Activated naive CD4-positive, alpha-beta T cell treated with anti-CD3 and anti-CD28 coated beads for 36 hours (primary cell): ENCODE measurements at regions of chr5 and their contacts with region 1.

Region 1: DNA sequence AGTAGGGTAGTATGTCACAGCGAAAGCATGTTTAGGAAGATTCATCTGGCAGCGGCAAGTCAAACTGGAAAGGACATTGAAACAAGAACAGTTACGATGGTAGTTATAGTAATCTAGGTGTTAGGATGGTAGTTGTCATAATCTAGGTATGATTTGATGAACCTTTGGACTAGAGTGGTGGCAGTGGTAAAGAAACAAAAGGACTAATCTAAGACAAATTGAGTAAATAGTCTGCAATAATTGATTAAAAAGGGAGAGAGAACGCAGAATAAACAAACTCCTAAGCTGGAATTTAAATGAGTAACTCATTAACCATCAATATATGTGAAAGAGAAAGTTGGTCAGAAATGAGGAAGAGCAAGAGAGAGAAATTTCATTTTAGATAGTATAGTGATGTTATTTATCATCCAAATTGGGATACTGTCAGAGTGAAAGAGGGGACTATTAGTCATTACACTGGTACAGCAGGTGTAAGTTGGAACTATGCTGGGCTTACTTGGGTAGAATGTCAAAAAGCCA is 56.8 kb downstream of the MTREX start:
- DNase-seq: peak; percentile 28
- H3K4me3 Mint-ChIP-seq: no peak overlapping the region
- H3K27ac Mint-ChIP-seq: peak overlapping the region; percentile 25
- H3K4me1 Mint-ChIP-seq: peaks cover 19% of the 10 kb centered on the region
- H3K27me3 Mint-ChIP-seq: no peaks in the 10 kb centered on the region

Region 2: DNA sequence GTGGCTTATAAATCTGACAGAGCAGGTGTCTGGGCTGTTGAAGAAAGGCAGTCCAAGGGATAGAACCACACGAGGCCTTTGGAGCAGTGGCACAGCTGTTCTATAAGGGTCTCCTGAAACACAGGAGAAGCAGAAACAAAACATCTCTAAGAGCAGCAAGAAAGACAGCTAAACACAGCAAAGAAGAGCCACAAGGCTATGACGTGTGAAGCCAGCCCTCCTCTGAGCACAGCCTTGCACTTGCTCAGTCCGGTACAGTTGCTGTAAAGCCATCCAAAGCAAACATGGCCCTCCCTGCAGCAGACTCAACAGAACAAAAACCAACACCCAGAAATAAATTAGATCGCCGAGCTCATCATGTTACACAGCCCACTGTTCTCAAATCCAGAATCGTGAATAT is 343.2 kb before region 1 on chr5:
- CTCF ChIA-PET with region 1: no interaction called
- intact Hi-C with region 1: loop called (anchors 1 kb)
- DNase-seq: no peak
- H3K4me3 Mint-ChIP-seq: no peak overlapping the region
- H3K27ac Mint-ChIP-seq: no peak overlapping the region
- H3K4me1 Mint-ChIP-seq: peaks cover 41% of the 10 kb centered on the region
- H3K27me3 Mint-ChIP-seq: no peaks in the 10 kb centered on the region

Region 3: GRCh38 chr5:55338810-55339243 is 25.8 kb before region 1 on chr5:
- CTCF ChIA-PET with region 1: no interaction called
- intact Hi-C with region 1: loop called (anchors 1 kb)
- DNase-seq: peak; percentile 76
- H3K4me3 Mint-ChIP-seq: no peak overlapping the region
- H3K27ac Mint-ChIP-seq: peak overlapping the region; percentile 21
- H3K4me1 Mint-ChIP-seq: peaks cover 27% of the 10 kb centered on the region
- H3K27me3 Mint-ChIP-seq: no peaks in the 10 kb centered on the region

Region 4: DNA sequence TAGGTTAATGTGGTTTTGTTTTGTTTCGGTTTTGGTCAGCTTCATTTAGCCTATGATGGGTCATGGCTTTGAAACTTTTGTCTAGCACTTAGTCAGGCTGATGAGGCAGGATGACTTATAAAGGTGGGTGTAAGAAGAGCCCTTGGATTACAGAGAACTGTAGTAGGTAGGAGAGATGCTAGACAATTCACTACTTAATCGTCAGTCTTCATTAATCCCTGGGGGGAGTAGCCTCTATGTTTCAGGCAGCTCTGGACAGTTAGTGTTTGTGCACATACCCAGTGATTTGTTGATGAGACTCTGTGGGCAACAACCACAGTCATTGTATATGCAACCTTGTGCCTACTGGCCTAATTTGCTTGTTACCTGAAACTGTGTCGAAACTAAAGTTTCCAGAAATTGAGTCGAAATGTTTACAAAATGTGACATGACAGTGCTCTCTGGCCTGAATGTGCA is 56.5 kb after region 1 on chr5:
- CTCF ChIA-PET with region 1: no interaction called
- intact Hi-C with region 1: loop called (anchors 1 kb)
- DNase-seq: peak; percentile 49
- H3K4me3 Mint-ChIP-seq: no peak overlapping the region
- H3K27ac Mint-ChIP-seq: no peak overlapping the region
- H3K4me1 Mint-ChIP-seq: peaks cover 33% of the 10 kb centered on the region
- H3K27me3 Mint-ChIP-seq: no peaks in the 10 kb centered on the region

Region 5: GRCh38 chr5:55771175-55771655 is 406.6 kb after region 1 on chr5:
- CTCF ChIA-PET with region 1: no interaction called
- intact Hi-C with region 1: loop called (anchors 1 kb)
- DNase-seq: no peak
- H3K4me3 Mint-ChIP-seq: no peak overlapping the region
- H3K27ac Mint-ChIP-seq: no peak overlapping the region
- H3K4me1 Mint-ChIP-seq: peaks cover 12% of the 10 kb centered on the region
- H3K27me3 Mint-ChIP-seq: no peaks in the 10 kb centered on the region